CD8-positive, alpha-beta T cell (primary cell): ENCODE measurements at regions of chr15 and their contacts with region 1.

Region 1: GRCh38 chr15:99928429-99928981 is 195.3 kb upstream of the LYSMD4 start:
- DNase-seq: peak; percentile 79 to 95 (median 89)
- ATAC-seq: peak; percentile 92
- H3K4me3 ChIP-seq: peak overlapping the region; percentile 63 to 64
- H3K4me3 Mint-ChIP-seq: peak overlapping the region; percentile 83
- H3K27ac ChIP-seq: peak overlapping the region; percentile 34 to 72
- H3K27ac Mint-ChIP-seq: peak overlapping the region; percentile 87
- H3K4me1 ChIP-seq: peaks cover 18% of the 10 kb centered on the region
- H3K4me1 Mint-ChIP-seq: peaks cover 20% of the 10 kb centered on the region
- H3K27me3 ChIP-seq: no peaks in the 10 kb centered on the region
- H3K27me3 Mint-ChIP-seq: peaks cover 3% of the 10 kb centered on the region
- CTCF ChIP-seq: peak; percentile 59

Region 2: DNA sequence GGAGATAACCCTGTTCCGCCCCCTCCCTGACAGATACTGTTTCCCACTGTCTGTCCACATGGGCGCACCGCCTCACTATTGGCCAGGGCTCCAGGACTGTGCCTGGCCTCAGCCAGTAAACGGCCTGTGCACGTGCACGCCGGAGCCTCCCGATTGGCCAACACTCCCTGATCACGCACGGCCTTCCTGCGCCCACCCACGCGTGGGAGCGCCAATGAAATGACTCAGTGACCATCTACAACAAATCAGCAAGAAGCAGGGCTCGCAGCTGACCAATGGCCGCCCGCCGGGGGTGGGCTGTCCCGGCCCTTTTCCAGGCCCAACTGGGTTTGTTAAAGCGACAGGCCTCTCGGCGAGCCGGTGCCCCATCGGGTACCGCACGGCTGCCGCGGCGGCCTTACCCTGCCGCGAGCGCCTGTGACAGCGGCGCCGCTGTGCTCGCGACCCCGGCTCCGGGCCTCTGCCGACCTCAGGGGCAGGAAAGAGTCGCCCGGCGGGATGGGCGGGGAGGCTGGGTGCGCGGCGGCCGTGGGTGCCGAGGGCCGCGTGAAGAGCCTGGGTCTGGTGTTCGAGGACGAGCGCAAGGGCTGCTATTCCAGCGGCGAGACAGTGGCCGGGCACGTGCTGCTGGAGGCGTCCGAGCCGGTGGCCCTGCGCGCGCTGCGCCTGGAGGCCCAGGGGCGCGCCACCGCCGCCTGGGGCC is 1968.0 kb before region 1 on chr15 and contains the start of gene ARRDC4:
- CTCF ChIA-PET with region 1: no interaction called
- POLR2A ChIA-PET with region 1: no interaction called
- intact Hi-C with region 1: loop called in 1 of 2 experiments (anchors 5 kb)
- DNase-seq: peak; percentile 84 to 100 (median 94)
- ATAC-seq: peak; percentile 94
- H3K4me3 ChIP-seq: peak within 1 kb of the TSS; percentile 35 to 55
- H3K4me3 Mint-ChIP-seq: peak within 1 kb of the TSS; percentile 83
- H3K27ac ChIP-seq: peak within 1 kb of the TSS; percentile 62 to 75
- H3K27ac Mint-ChIP-seq: peak within 1 kb of the TSS; percentile 86
- H3K4me1 ChIP-seq: peaks cover 13% of the 10 kb centered on the region
- H3K4me1 Mint-ChIP-seq: peaks cover 19% of the 10 kb centered on the region
- H3K27me3 ChIP-seq: no peaks in the 10 kb centered on the region
- H3K27me3 Mint-ChIP-seq: no peaks in the 10 kb centered on the region
- CTCF ChIP-seq: no peak
- total RNA-seq, gene ARRDC4: 4.2 to 5.1 TPM

Region 3: DNA sequence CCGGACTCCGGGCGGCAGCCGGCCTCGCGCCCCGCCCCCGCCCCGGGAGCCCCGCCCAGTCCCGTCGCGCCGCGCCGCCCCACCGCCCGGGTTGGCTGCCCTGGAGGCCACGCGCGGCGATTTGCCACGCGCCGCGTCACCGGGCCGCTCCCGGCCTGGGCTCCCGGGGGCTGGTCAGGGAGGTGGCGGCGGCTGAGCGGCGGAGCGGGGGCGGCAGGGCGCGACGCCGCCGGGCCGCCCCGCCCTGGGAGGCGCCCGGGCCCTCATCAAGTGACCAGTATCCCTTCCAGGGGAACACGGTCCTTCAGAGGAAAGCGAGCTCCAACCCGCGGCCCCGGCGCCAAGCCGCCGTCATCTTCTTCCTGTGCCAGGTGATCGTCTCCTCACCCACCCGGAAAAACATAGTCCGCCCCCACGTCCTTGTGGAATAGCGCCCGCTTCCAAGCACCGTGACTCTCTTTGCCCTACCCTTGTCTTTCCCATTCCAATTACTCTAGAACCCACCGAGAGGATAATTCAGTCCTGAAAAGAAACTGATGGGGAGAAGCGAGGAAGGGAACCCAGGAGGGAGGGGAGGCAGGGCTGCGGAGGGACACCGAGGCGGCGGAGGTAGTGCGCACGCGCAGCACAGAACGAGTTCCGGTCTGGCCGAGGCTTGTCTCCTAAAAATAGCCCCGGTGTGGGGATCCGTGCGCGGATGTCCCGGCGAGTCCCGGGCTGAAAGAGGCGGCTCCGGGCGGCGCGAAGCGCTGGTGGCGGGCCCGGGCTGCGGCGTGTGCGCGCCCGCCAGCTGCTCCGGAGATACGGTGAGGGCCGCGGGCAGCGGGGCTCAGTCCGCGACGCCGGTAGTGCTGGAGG is 363.0 kb before region 1 on chr15 and contains the start of gene MEF2A:
- CTCF ChIA-PET with region 1: no interaction called
- POLR2A ChIA-PET with region 1: no interaction called
- intact Hi-C with region 1: loop called in 1 of 2 experiments (anchors 5 kb)
- DNase-seq: peak; percentile 81 to 96 (median 91)
- ATAC-seq: peak; percentile 66
- H3K4me3 ChIP-seq: peak within 1 kb of the TSS; percentile 74 to 91
- H3K4me3 Mint-ChIP-seq: peak within 1 kb of the TSS; percentile 96
- H3K27ac ChIP-seq: peak within 1 kb of the TSS; percentile 64 to 90
- H3K27ac Mint-ChIP-seq: peak within 1 kb of the TSS; percentile 96
- H3K4me1 ChIP-seq: peaks cover 40% of the 10 kb centered on the region
- H3K4me1 Mint-ChIP-seq: peaks cover 55% of the 10 kb centered on the region
- H3K27me3 ChIP-seq: no peaks in the 10 kb centered on the region
- H3K27me3 Mint-ChIP-seq: no peaks in the 10 kb centered on the region
- CTCF ChIP-seq: no peak
- total RNA-seq, gene MEF2A: 20.3 to 24.9 TPM

Region 4: GRCh38 chr15:99873451-99873850 is 55.1 kb before region 1 on chr15:
- CTCF ChIA-PET with region 1: no interaction called
- POLR2A ChIA-PET with region 1: no interaction called
- intact Hi-C with region 1: no loop called
- DNase-seq: no peak
- ATAC-seq: no peak
- H3K4me3 ChIP-seq: no peak overlapping the region
- H3K4me3 Mint-ChIP-seq: no peak overlapping the region
- H3K27ac ChIP-seq: no peak overlapping the region
- H3K27ac Mint-ChIP-seq: no peak overlapping the region
- H3K4me1 ChIP-seq: no peaks in the 10 kb centered on the region
- H3K4me1 Mint-ChIP-seq: no peaks in the 10 kb centered on the region
- H3K27me3 ChIP-seq: no peaks in the 10 kb centered on the region
- H3K27me3 Mint-ChIP-seq: no peaks in the 10 kb centered on the region
- CTCF ChIP-seq: no peak

Region 5: GRCh38 chr15:100341662-100342560 is 413.4 kb after region 1 on chr15 and contains the start of gene ADAMTS17:
- CTCF ChIA-PET with region 1: interaction called, 93 read pairs
- POLR2A ChIA-PET with region 1: interaction called, 9 read pairs
- intact Hi-C with region 1: loop called (anchors 2 kb)
- DNase-seq: peak; percentile 90 to 98 (median 95)
- ATAC-seq: peak; percentile 94
- H3K4me3 ChIP-seq: peak within 1 kb of the TSS; percentile 54 to 80
- H3K4me3 Mint-ChIP-seq: peak within 1 kb of the TSS; percentile 80
- H3K27ac ChIP-seq: peak within 1 kb of the TSS in 1 of 2 experiments; percentile 47
- H3K27ac Mint-ChIP-seq: peak within 1 kb of the TSS; percentile 22
- H3K4me1 ChIP-seq: peaks cover 12% of the 10 kb centered on the region
- H3K4me1 Mint-ChIP-seq: peaks cover 23% of the 10 kb centered on the region
- H3K27me3 ChIP-seq: no peaks in the 10 kb centered on the region
- H3K27me3 Mint-ChIP-seq: no peaks in the 10 kb centered on the region
- CTCF ChIP-seq: peak; percentile 94
- total RNA-seq, gene ADAMTS17: 15.3 to 18.0 TPM

Region 6: GRCh38 chr15:100602064-100602822 is 673.7 kb after region 1 on chr15 and contains the starts of genes ASB7 and LINS1:
- CTCF ChIA-PET with region 1: interaction called, 3 read pairs
- POLR2A ChIA-PET with region 1: interaction called, 3 read pairs
- intact Hi-C with region 1: loop called (anchors 2 kb)
- DNase-seq: peak; percentile 99 to 100 (median 100)
- ATAC-seq: peak; percentile 89
- H3K4me3 ChIP-seq: peak within 1 kb of the TSS; percentile 90 to 95
- H3K4me3 Mint-ChIP-seq: no peak within 1 kb of the TSS
- H3K27ac ChIP-seq: peak within 1 kb of the TSS; percentile 71 to 94
- H3K27ac Mint-ChIP-seq: peak within 1 kb of the TSS; percentile 93
- H3K4me1 ChIP-seq: peaks cover 58% of the 10 kb centered on the region
- H3K4me1 Mint-ChIP-seq: peaks cover 64% of the 10 kb centered on the region
- H3K27me3 ChIP-seq: no peaks in the 10 kb centered on the region
- H3K27me3 Mint-ChIP-seq: no peaks in the 10 kb centered on the region
- CTCF ChIP-seq: no peak
- total RNA-seq, gene ASB7: 17.2 to 19.9 TPM
- total RNA-seq, gene LINS1: 42.8 to 45.9 TPM

Region 7: GRCh38 chr15:101258238-101259144 is 1330.0 kb after region 1 on chr15:
- CTCF ChIA-PET with region 1: no interaction called
- POLR2A ChIA-PET with region 1: no interaction called
- intact Hi-C with region 1: loop called in 1 of 2 experiments (anchors 5 kb)
- DNase-seq: peak in 7 of 9 experiments; percentile 43 to 80 (median 60)
- ATAC-seq: peak; percentile 71
- H3K4me3 ChIP-seq: no peak overlapping the region
- H3K4me3 Mint-ChIP-seq: no peak overlapping the region
- H3K27ac ChIP-seq: no peak overlapping the region
- H3K27ac Mint-ChIP-seq: no peak overlapping the region
- H3K4me1 ChIP-seq: no peaks in the 10 kb centered on the region
- H3K4me1 Mint-ChIP-seq: peaks cover 2% of the 10 kb centered on the region
- H3K27me3 ChIP-seq: no peaks in the 10 kb centered on the region
- H3K27me3 Mint-ChIP-seq: peaks cover 15% of the 10 kb centered on the region
- CTCF ChIP-seq: peak; percentile 90